Heart right ventricle (tissue), 16 donors: ENCODE measurements at regions of chr2 and their contacts with region 1.

Region 1: GRCh38 chr2:168346725-168347477 is 99.5 kb upstream of the STK39 start:
- DNase-seq: peak; percentile 23 to 69
- ATAC-seq: peak; percentile 80 to 95 (median 86)
- H3K4me3 ChIP-seq: peak overlapping the region in 9 of 10 donors; percentile 31 to 60 (median 51)
- H3K27ac ChIP-seq: peak overlapping the region in 6 of 10 donors; percentile 19 to 61 (median 40)
- H3K4me1 ChIP-seq: peaks cover 0 to 9% (median 0%) of the 10 kb centered on the region in 9 donors
- H3K27me3 ChIP-seq: no peaks in the 10 kb centered on the region
- CTCF ChIP-seq: peak; percentile 70 to 91 (median 83)

Region 2: GRCh38 chr2:168136392-168136977 is 210.4 kb before region 1 on chr2:
- intact Hi-C with region 1: loop called in 2 of 10 experiments (anchors 10 kb)
- DNase-seq: no peak
- ATAC-seq: peak in 1 of 8 donors; percentile 28
- H3K4me3 ChIP-seq: no peak overlapping the region
- H3K27ac ChIP-seq: peak overlapping the region in 3 of 10 donors; percentile 15 to 46 (median 45)
- H3K4me1 ChIP-seq: peaks cover 0 to 47% (median 21%) of the 10 kb centered on the region in 9 donors
- H3K27me3 ChIP-seq: no peaks in the 10 kb centered on the region
- CTCF ChIP-seq: peak; percentile 14 to 65 (median 59)

Region 3: GRCh38 chr2:168293766-168294165 is 53.1 kb before region 1 on chr2:
- intact Hi-C with region 1: no loop called
- DNase-seq: no peak
- ATAC-seq: no peak
- H3K4me3 ChIP-seq: no peak overlapping the region
- H3K27ac ChIP-seq: no peak overlapping the region
- H3K4me1 ChIP-seq: no peaks in the 10 kb centered on the region
- H3K27me3 ChIP-seq: no peaks in the 10 kb centered on the region
- CTCF ChIP-seq: no peak

Region 4: DNA sequence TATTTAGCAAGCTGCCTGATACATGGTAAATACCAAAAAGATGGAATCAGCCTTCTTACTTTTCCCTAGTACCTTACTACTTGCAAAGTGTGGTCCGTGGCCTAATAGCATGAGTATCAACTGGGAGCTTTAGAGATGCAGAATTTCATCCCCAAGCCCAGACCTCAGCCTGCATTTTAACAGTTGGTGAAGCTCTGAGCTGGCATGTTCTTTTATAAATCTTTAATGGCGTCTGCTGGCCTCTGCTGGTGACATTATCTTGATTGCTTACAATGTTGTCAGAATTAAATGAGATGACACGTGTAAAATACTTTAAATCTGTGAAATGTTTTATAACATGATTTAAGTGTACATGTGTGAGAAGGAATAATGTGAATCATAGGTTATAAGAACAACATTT is 340.4 kb after region 1 on chr2:
- intact Hi-C with region 1: loop called in 6 of 10 experiments (anchors 2 to 10 kb)
- DNase-seq: no peak
- ATAC-seq: peak in 5 of 8 donors; percentile 54 to 70 (median 57)
- H3K4me3 ChIP-seq: no peak overlapping the region
- H3K27ac ChIP-seq: no peak overlapping the region
- H3K4me1 ChIP-seq: peaks cover 0 to 32% (median 3%) of the 10 kb centered on the region in 9 donors
- H3K27me3 ChIP-seq: no peaks in the 10 kb centered on the region
- CTCF ChIP-seq: peak in 7 of 9 donors; percentile 14 to 54 (median 33)

Region 5: GRCh38 chr2:168699844-168700417 is 353.0 kb after region 1 on chr2:
- intact Hi-C with region 1: loop called in 7 of 10 experiments (anchors 5 to 10 kb)
- DNase-seq: peak; percentile 79 to 85
- ATAC-seq: peak in 7 of 8 donors; percentile 62 to 80 (median 77)
- H3K4me3 ChIP-seq: no peak overlapping the region
- H3K27ac ChIP-seq: peak overlapping the region in 2 of 10 donors; percentile 3
- H3K4me1 ChIP-seq: peaks cover 6 to 33% (median 13%) of the 10 kb centered on the region in 9 donors
- H3K27me3 ChIP-seq: no peaks in the 10 kb centered on the region
- CTCF ChIP-seq: no peak

Region 6: GRCh38 chr2:168705534-168706470 is 358.9 kb after region 1 on chr2:
- intact Hi-C with region 1: loop called in 5 of 10 experiments (anchors 5 to 10 kb)
- DNase-seq: no peak
- ATAC-seq: no peak
- H3K4me3 ChIP-seq: no peak overlapping the region
- H3K27ac ChIP-seq: no peak overlapping the region
- H3K4me1 ChIP-seq: peaks cover 0 to 8% (median 4%) of the 10 kb centered on the region in 9 donors
- H3K27me3 ChIP-seq: no peaks in the 10 kb centered on the region
- CTCF ChIP-seq: peak in 5 of 9 donors; percentile 29 to 47 (median 38)

Region 7: DNA sequence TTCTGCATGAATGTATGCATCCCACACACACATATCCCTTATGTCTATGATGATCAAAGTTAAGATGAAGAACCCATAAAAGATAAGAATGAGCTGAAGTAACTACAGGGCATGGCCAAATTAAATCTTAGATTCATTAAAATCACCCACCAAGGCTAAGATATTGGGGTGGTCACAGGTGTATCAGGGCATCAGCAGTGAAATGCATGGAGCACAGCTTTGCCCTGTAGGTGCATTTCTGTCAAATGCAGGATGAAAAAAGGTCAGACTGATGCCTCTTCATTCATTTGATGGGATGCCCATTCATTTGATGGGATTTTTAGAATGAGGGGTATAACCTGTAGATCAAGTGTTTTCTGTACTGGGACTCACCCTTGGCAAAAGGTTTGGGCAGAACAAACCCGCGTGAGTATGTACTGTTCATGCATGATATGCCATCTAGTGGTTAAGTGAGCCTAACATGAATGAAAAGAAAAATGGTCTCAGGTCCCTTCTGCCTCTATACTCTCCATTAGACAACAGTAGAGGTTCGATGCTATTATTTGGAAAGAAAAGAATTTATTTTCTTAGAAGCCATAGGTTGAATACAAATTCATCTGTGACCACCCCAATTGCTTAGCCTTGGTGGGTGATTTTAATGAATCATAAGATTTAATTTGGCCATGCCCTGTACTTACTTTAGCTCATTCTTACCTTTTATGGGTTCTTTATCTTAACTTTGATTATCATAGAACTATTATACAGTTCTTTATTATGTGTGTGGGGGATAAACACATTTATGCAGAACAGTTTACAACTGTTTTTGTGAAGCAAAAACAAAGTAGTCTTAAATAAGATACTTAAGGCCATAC is 412.3 kb after region 1 on chr2:
- intact Hi-C with region 1: loop called (anchors 2 to 5 kb)
- DNase-seq: peak in 1 of 2 donors; percentile 25
- ATAC-seq: peak; percentile 54 to 78 (median 72)
- H3K4me3 ChIP-seq: no peak overlapping the region
- H3K27ac ChIP-seq: no peak overlapping the region
- H3K4me1 ChIP-seq: peaks cover 0 to 30% (median 17%) of the 10 kb centered on the region in 9 donors
- H3K27me3 ChIP-seq: no peaks in the 10 kb centered on the region
- CTCF ChIP-seq: peak; percentile 39 to 77 (median 64)

Region 8: GRCh38 chr2:168920504-168921157 is 573.7 kb after region 1 on chr2:
- intact Hi-C with region 1: loop called in 9 of 10 experiments (anchors 1 to 5 kb)
- DNase-seq: no peak
- ATAC-seq: no peak
- H3K4me3 ChIP-seq: no peak overlapping the region
- H3K27ac ChIP-seq: no peak overlapping the region
- H3K4me1 ChIP-seq: no peaks in the 10 kb centered on the region
- H3K27me3 ChIP-seq: peaks cover 0 to 14% (median 4%) of the 10 kb centered on the region in 7 donors
- CTCF ChIP-seq: peak; percentile 49 to 79 (median 70)